MCF 10A (cell line): ENCODE measurements at regions of chr1 and their contacts with region 1.

Region 1: GRCh38 chr1:207897188-207897587 is 13.7 kb downstream of the CD34 start:
- DNase-seq: peak; percentile 32
- H3K4me3 Mint-ChIP-seq: no peak overlapping the region
- H3K27ac Mint-ChIP-seq: no peak overlapping the region
- H3K4me1 Mint-ChIP-seq: no peaks in the 10 kb centered on the region
- H3K27me3 Mint-ChIP-seq: no peaks in the 10 kb centered on the region
- CTCF ChIP-seq: peak; percentile 63

Region 2: GRCh38 chr1:207910591-207911354 is 13.6 kb after region 1 on chr1 and contains the start of gene CD34:
- CTCF ChIA-PET with region 1: interaction called, 27 read pairs
- POLR2A ChIA-PET with region 1: no interaction called
- intact Hi-C with region 1: no loop called
- DNase-seq: no peak
- H3K4me3 Mint-ChIP-seq: no peak within 1 kb of the TSS
- H3K27ac Mint-ChIP-seq: no peak within 1 kb of the TSS
- H3K4me1 Mint-ChIP-seq: peaks cover 6% of the 10 kb centered on the region
- H3K27me3 Mint-ChIP-seq: peaks cover 25% of the 10 kb centered on the region
- CTCF ChIP-seq: no peak
- total RNA-seq, gene CD34: 0.52 TPM in 1 of 2 replicates, not detected in the other

Region 3: DNA sequence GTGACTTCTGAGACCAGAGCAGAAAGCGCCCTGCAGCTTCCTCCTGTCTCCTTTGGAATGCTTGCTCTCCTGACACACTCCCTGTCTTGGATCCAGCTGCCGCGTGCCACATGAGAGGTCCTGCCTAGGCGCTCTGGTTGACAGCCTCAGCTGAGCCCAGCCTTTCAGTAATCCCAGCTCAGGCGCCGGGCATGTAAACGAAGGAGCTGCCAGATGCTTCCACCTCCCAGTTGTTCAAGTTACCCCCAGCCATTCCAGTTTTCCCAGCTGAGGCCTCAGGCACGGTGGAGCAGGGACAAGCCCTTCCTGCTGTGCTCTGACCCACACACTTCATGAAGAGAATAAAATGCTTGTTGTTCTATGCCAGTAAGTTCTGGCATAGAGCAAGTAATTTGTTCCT is 28.0 kb after region 1 on chr1:
- CTCF ChIA-PET with region 1: interaction called, 17 read pairs
- POLR2A ChIA-PET with region 1: interaction called, 3 read pairs
- intact Hi-C with region 1: no loop called
- DNase-seq: no peak
- H3K4me3 Mint-ChIP-seq: no peak overlapping the region
- H3K27ac Mint-ChIP-seq: no peak overlapping the region
- H3K4me1 Mint-ChIP-seq: no peaks in the 10 kb centered on the region
- H3K27me3 Mint-ChIP-seq: peaks cover 33% of the 10 kb centered on the region
- CTCF ChIP-seq: no peak